ENCODE measurements at regions of chr22 and their contacts with region 1.

Region 1: DNA sequence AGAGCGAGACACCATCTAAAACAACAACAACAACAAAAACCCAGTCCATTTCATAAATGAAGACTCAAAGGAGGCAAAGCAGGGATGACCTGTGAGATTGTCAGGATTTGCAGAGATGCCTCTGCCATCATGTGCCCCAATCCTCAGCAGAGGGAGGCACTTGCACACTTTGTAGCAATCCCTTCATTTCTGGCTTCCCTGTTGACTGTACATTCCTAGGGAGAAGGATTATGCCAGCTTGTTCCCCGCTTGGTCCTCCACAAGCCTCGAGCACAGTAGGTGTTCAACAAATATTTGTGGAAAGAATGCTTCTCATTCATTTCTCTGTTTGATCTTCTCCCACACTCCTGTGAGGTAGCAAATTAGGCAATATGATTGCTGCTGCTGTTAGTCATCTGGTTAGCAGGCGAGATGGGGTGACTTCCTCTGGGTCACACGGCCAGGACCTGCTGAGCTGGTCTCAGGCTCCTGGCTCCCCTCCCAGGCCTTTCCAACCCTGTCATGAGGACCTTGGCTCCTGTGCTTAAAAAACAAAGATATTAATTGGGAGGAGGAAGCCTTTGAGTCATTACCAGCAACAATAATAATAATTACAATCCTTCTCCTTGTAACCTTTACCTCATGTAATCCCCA is 34.1 kb downstream of the LIF start:
- DNase-seq: peak; percentile 95
- ATAC-seq: peak; percentile 57
- H3K4me3 ChIP-seq: no peak overlapping the region
- H3K27ac ChIP-seq: peak overlapping the region; percentile 100
- H3K4me1 ChIP-seq: peaks cover 67% of the 10 kb centered on the region
- H3K27me3 ChIP-seq: no peaks in the 10 kb centered on the region
- CTCF ChIP-seq: no peak

Region 2: DNA sequence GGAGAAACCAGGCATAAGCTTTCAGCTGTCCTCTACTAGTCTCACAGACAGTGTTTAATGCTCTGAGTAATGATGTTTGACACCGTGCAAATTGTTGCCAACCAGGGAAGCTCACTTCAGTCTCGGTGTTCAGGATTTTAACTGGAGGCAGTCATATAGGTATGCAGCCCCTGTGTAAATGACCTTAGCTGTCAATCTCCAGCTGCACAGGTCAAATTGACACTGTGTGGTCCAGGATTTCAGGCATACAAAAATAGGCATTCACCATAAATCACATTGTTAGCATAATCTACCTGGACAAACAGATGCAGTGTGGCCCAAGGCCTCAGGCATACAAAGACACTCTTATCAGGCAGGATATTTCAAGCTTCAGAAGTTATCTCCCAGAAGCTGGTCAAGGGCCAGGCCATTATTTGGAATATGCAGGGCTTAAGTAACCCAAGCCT is 157.9 kb before region 1 on chr22:
- CTCF ChIA-PET with region 1: no interaction called
- POLR2A ChIA-PET with region 1: no interaction called
- intact Hi-C with region 1: no loop called
- DNase-seq: no peak
- ATAC-seq: no peak
- H3K4me3 ChIP-seq: no peak overlapping the region
- H3K27ac ChIP-seq: no peak overlapping the region
- H3K4me1 ChIP-seq: no peaks in the 10 kb centered on the region
- H3K27me3 ChIP-seq: no peaks in the 10 kb centered on the region
- CTCF ChIP-seq: no peak

Region 3: GRCh38 chr22:30196141-30196879 is 16.2 kb before region 1 on chr22:
- CTCF ChIA-PET with region 1: no interaction called
- POLR2A ChIA-PET with region 1: interaction called, 17 read pairs
- intact Hi-C with region 1: loop called (anchors 2 kb)
- DNase-seq: peak; percentile 93
- ATAC-seq: peak; percentile 69
- H3K4me3 ChIP-seq: no peak overlapping the region
- H3K27ac ChIP-seq: peak overlapping the region; percentile 99
- H3K4me1 ChIP-seq: peaks cover 56% of the 10 kb centered on the region
- H3K27me3 ChIP-seq: no peaks in the 10 kb centered on the region
- CTCF ChIP-seq: no peak

Region 4: GRCh38 chr22:30228509-30229359 is 16.3 kb after region 1 on chr22:
- CTCF ChIA-PET with region 1: no interaction called
- POLR2A ChIA-PET with region 1: interaction called, 14 read pairs
- intact Hi-C with region 1: loop called (anchors 2 kb)
- DNase-seq: peak; percentile 93
- ATAC-seq: peak; percentile 57
- H3K4me3 ChIP-seq: no peak overlapping the region
- H3K27ac ChIP-seq: peak overlapping the region; percentile 92
- H3K4me1 ChIP-seq: peaks cover 48% of the 10 kb centered on the region
- H3K27me3 ChIP-seq: no peaks in the 10 kb centered on the region
- CTCF ChIP-seq: no peak

Region 5: GRCh38 chr22:30253205-30253852 is 40.9 kb after region 1 on chr22:
- CTCF ChIA-PET with region 1: interaction called, 3 read pairs
- POLR2A ChIA-PET with region 1: interaction called, 11 read pairs
- intact Hi-C with region 1: loop called (anchors 2 kb)
- DNase-seq: peak; percentile 83
- ATAC-seq: peak; percentile 2
- H3K4me3 ChIP-seq: peak overlapping the region; percentile 75; the same call in 1 of the 2 replicates
- H3K27ac ChIP-seq: peak overlapping the region; percentile 99
- H3K4me1 ChIP-seq: peaks cover 86% of the 10 kb centered on the region
- H3K27me3 ChIP-seq: no peaks in the 10 kb centered on the region
- CTCF ChIP-seq: no peak

Region 6: GRCh38 chr22:30284172-30284571 is 71.7 kb after region 1 on chr22:
- CTCF ChIA-PET with region 1: no interaction called
- POLR2A ChIA-PET with region 1: interaction called, 12 read pairs
- intact Hi-C with region 1: no loop called
- DNase-seq: no peak
- ATAC-seq: no peak
- H3K4me3 ChIP-seq: no peak overlapping the region
- H3K27ac ChIP-seq: no peak overlapping the region
- H3K4me1 ChIP-seq: peaks cover 8% of the 10 kb centered on the region
- H3K27me3 ChIP-seq: no peaks in the 10 kb centered on the region
- CTCF ChIP-seq: no peak

Region 7: GRCh38 chr22:30324014-30324730 is 111.7 kb after region 1 on chr22:
- CTCF ChIA-PET with region 1: no interaction called
- POLR2A ChIA-PET with region 1: no interaction called
- intact Hi-C with region 1: no loop called
- DNase-seq: no peak
- ATAC-seq: no peak
- H3K4me3 ChIP-seq: no peak overlapping the region
- H3K27ac ChIP-seq: no peak overlapping the region
- H3K4me1 ChIP-seq: peaks cover 28% of the 10 kb centered on the region
- H3K27me3 ChIP-seq: no peaks in the 10 kb centered on the region
- CTCF ChIP-seq: no peak

Measured in PC-3 (cell line).